ENCODE measurements at regions of chr2 and their contacts with region 1.

Region 1: DNA sequence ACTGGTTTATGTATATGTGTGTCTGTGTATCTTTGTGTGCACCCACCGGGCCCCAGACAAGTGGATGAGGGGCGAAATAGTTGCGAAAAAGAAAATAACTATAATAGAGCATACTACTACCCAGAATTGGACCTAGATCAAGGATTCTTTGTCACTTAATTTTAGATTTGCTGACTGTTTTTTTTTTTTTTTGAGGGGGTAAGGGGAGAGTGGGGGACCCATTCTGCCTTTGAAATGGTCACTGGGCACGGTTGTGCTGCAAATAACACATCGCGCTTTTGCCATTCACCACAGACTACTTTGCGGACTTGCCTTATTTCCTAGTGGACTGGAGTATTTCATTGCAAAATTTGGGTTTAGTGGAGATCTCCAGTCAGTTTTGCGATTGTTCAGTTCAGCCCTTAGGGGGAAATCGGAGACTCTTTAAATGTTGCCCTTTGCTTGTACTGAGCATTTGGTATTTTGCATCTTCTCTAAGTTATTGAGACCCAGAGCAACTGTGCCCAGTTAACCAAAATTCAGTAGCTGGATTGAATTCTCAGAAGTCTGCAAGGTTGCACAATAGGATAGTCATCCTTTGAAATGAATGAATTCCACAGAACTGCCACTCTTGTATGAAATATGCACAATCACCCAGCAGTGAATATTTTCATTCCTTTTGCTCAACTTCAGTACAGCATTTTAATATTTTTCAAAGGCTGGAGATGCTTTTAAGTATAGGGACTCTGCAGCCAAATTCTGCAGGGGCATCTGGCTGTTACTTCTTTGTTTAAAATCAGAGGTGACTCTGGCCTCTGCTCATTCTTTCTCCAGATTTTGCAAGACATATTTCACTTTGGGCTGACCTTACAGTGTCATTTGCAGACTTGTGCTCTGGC is 2.9 kb downstream of the TRIB2 start:
- DNase-seq: no peak
- ATAC-seq: no peak
- H3K4me3 ChIP-seq: peak overlapping the region; percentile 88
- H3K27ac ChIP-seq: peak overlapping the region; percentile 95
- H3K4me1 ChIP-seq: peaks cover 53% of the 10 kb centered on the region
- H3K27me3 ChIP-seq: peaks cover 5% of the 10 kb centered on the region
- CTCF ChIP-seq: no peak

Region 2: DNA sequence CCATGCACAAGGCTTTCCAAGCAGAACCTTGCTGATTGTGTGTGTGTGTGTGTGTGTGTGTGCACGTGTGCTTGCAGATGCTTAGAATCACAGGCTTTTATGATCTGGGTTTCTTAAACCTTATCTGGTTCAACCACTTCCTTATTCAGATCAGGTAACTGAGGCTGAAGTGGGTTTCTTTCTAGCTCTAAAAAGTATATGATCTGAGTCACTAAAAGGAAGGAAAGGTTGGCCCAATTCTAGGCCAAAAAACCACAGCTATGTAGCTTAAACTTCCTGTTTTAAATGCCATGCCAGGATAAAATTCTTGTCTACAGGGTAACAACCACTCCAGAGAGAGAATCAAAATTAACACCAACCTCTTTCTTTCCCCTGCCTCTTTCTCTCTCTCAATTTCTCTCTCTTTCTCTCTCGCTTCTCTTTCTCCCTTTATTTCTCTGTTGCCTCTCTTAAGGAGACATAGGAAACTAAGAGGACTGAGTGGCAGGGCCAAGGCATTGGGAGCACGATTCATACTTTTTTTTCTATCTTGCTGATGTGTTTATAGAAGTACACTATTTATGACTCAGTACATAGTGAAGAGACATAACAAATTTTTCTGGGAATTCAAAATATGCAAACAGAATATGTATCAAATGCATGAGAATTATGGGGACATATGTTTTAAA is 137.4 kb after region 1 on chr2:
- intact Hi-C with region 1: no loop called
- DNase-seq: no peak
- ATAC-seq: peak; percentile 42 to 50
- H3K4me3 ChIP-seq: no peak overlapping the region
- H3K27ac ChIP-seq: no peak overlapping the region
- H3K4me1 ChIP-seq: peaks cover 19% of the 10 kb centered on the region
- H3K27me3 ChIP-seq: no peaks in the 10 kb centered on the region
- CTCF ChIP-seq: no peak

Region 3: GRCh38 chr2:12931186-12931844 is 211.7 kb after region 1 on chr2:
- intact Hi-C with region 1: loop called (anchors 5 kb)
- DNase-seq: no peak
- ATAC-seq: peak; percentile 78 to 84
- H3K4me3 ChIP-seq: no peak overlapping the region
- H3K27ac ChIP-seq: no peak overlapping the region
- H3K4me1 ChIP-seq: no peaks in the 10 kb centered on the region
- H3K27me3 ChIP-seq: no peaks in the 10 kb centered on the region
- CTCF ChIP-seq: peak; percentile 89

Region 4: DNA sequence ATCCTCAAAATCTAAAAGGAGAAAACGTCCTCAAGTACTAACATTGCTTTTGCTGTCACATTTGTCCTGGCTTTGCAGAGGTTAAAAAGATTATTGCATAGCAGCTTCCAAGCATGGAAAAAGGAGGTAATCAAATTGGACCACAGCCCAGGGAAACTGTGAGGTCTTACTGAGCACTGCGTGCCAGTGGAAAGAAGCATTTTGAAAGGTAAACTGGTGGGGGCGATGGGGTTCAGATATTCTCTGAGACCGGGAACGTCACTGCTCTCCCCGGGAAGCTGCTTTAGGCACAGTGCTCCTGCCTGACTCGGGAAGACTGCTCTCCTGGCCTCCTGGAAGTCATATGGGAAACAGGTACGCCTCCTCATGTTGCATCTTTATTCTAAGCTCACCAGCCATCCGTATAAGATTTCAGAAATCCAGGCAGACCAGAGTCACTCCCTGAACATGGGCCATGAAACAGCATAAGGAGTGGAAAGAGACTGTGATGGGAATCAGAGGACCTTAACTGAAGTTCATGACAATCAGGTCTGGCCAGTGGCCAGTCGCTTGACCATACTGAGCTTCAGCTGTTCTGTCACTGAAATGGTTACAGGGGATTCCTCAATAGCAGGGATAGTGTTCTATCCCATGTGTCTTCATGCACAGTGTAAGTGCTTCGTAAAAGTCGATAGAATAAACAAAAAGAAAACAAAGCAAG is 281.2 kb after region 1 on chr2:
- intact Hi-C with region 1: loop called (anchors 5 kb)
- DNase-seq: no peak
- ATAC-seq: no peak
- H3K4me3 ChIP-seq: no peak overlapping the region
- H3K27ac ChIP-seq: no peak overlapping the region
- H3K4me1 ChIP-seq: no peaks in the 10 kb centered on the region
- H3K27me3 ChIP-seq: no peaks in the 10 kb centered on the region
- CTCF ChIP-seq: no peak

Measured in lower lobe of right lung (tissue), 2 donors.